H1 (cell line): ENCODE measurements at regions of chr3 and their contacts with region 1.

Region 1: GRCh38 chr3:107496855-107497254 is 25.9 kb upstream of the BBX start:
- DNase-seq: no peak
- H3K4me3 ChIP-seq: no peak overlapping the region
- H3K27ac ChIP-seq: no peak overlapping the region
- H3K4me1 ChIP-seq: peaks cover 0 to 3% (median 2%) of the 10 kb centered on the region in 4 experiments; a peak in 3 of 7 replicates
- H3K27me3 ChIP-seq: no peaks in the 10 kb centered on the region
- CTCF ChIP-seq: no peak
- EP300 ChIP-seq: no peak
- POLR2A ChIP-seq: no peak
- RAD21 ChIP-seq: no peak

Region 2: GRCh38 chr3:107512108-107512507 is 15.3 kb after region 1 on chr3:
- CTCF ChIA-PET with region 1: interaction called, 13 read pairs
- POLR2A ChIA-PET with region 1: no interaction called
- DNase-seq: no peak
- H3K4me3 ChIP-seq: no peak overlapping the region
- H3K27ac ChIP-seq: no peak overlapping the region
- H3K4me1 ChIP-seq: no peaks in the 10 kb centered on the region
- H3K27me3 ChIP-seq: no peaks in the 10 kb centered on the region
- CTCF ChIP-seq: peak in 2 of 3 experiments; percentile 27; a peak in 2 of 4 replicates
- EP300 ChIP-seq: no peak
- POLR2A ChIP-seq: no peak
- RAD21 ChIP-seq: peak; percentile 52 to 57

Region 3: GRCh38 chr3:107574650-107575049 is 77.8 kb after region 1 on chr3:
- CTCF ChIA-PET with region 1: no interaction called
- POLR2A ChIA-PET with region 1: no interaction called
- DNase-seq: no peak
- H3K4me3 ChIP-seq: no peak overlapping the region
- H3K27ac ChIP-seq: no peak overlapping the region
- H3K4me1 ChIP-seq: peaks cover 2 to 10% (median 8%) of the 10 kb centered on the region in 4 experiments; a peak in 4 of 7 replicates
- H3K27me3 ChIP-seq: no peaks in the 10 kb centered on the region
- CTCF ChIP-seq: peak in 2 of 3 experiments; percentile 44 to 54; a peak in 2 of 4 replicates
- EP300 ChIP-seq: no peak
- POLR2A ChIP-seq: no peak
- RAD21 ChIP-seq: peak; percentile 78